ENCODE measurements at regions of chr4 and their contacts with region 1.

Region 1: GRCh38 chr4:16916719-16917337 is 18.4 kb upstream of the LDB2 start:
- DNase-seq: peak in 1 of 2 donors; percentile 30
- ATAC-seq: peak; percentile 37

Region 2: GRCh38 chr4:16078195-16078760 is 838.5 kb before region 1 on chr4:
- intact Hi-C with region 1: no loop called
- DNase-seq: no peak
- ATAC-seq: no peak

Region 3: GRCh38 chr4:16827794-16828724 is 88.8 kb before region 1 on chr4:
- intact Hi-C with region 1: no loop called
- DNase-seq: no peak
- ATAC-seq: no peak

Region 4: GRCh38 chr4:17324386-17324830 is 407.6 kb after region 1 on chr4:
- intact Hi-C with region 1: loop called in 1 of 2 experiments (anchors 10 kb)
- DNase-seq: peak in 1 of 2 donors; percentile 27
- ATAC-seq: no peak

Measured in left colon (tissue), 2 donors.